ENCODE measurements at regions of chr12 and their contacts with region 1.

Region 1: DNA sequence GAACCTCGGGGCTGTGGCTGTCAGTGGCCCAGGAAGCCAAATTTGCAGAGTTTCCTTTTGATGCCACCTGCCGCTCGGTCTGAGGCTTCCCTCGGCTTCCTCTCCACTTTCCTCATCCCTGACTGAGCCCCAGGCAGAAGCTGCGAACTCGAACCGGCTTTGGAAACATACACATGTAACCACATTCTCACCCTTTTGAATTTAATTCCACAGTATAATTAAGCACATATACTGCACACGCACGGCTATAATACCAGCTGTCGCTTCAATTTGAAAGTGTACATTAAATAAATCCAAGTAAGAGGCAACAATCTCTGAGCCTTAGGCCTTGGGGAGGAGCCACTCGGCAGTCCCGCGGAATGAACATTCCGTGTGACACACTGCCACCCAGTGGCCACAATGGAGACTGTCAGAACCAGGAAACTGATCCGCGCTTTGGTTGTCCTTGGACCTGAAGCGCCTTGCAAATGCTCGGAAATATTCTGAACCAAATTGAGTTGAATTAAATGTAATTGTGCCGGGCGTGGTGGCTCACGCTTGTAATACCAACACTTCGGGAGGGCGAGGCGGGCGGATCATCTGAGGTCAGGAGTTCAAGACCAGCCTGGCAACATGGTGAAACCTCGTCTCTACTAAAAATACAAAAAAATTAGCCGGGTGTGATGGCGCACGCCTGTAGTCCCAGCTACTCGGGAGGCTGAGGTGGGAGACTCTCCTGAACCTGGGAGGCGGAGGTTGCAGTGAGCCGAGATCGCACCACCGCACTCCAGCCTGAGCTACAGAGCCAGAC is 117.9 kb upstream of the TMPO start:
- DNase-seq: peak; percentile 65 to 81 (median 78)
- ATAC-seq: peak; percentile 98
- H3K4me3 ChIP-seq: peak overlapping the region; percentile 76
- H3K4me3 Mint-ChIP-seq: peak overlapping the region; percentile 79 to 89 (median 86)
- H3K27ac ChIP-seq: peak overlapping the region; percentile 11
- H3K27ac Mint-ChIP-seq: peak overlapping the region; percentile 3 to 84 (median 58)
- H3K4me1 ChIP-seq: peaks cover 0 to 11% of the 10 kb centered on the region in 2 donors
- H3K4me1 Mint-ChIP-seq: peaks cover 11 to 31% (median 17%) of the 10 kb centered on the region in 7 donors
- H3K27me3 ChIP-seq: no peaks in the 10 kb centered on the region
- H3K27me3 Mint-ChIP-seq: peaks cover 0 to 7% (median 0%) of the 10 kb centered on the region in 5 donors

Region 2: DNA sequence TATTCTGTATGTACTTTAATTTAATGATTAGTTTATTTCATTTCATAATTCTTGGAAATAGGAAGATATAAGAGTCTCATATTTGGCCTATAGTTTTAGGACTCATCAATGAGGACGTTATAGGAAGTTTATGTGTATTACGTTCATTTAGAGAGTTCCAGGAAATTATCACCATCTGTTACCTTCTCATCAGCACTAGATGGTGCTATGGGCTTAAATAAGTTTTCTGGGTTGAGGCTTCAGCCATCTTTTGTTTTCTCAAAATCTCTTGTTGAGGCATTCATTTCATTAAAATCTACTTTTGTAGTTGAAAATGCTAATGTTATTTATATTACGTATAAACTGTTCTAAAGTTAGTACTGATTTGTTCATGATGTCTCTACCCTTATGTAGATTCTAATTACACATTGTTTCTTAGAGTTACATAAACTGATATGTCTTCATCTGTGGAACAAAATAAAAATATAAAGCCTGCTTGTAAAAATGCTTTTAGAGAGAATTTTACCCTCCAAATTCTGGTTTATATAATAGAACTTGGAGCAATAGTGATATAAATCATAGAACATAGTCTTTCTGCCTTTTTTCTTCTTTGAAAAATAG is 1818.9 kb before region 1 on chr12:
- CTCF ChIA-PET with region 1: interaction called, 3 read pairs
- POLR2A ChIA-PET with region 1: no interaction called
- intact Hi-C with region 1: loop called (anchors 1 kb)
- DNase-seq: peak in 7 of 9 donors; percentile 26 to 62 (median 52)
- ATAC-seq: peak; percentile 84
- H3K4me3 ChIP-seq: no peak overlapping the region
- H3K4me3 Mint-ChIP-seq: no peak overlapping the region
- H3K27ac ChIP-seq: no peak overlapping the region
- H3K27ac Mint-ChIP-seq: no peak overlapping the region
- H3K4me1 ChIP-seq: no peaks in the 10 kb centered on the region
- H3K4me1 Mint-ChIP-seq: peaks cover 0 to 3% (median 0%) of the 10 kb centered on the region in 7 donors
- H3K27me3 ChIP-seq: no peaks in the 10 kb centered on the region
- H3K27me3 Mint-ChIP-seq: peaks cover 0 to 12% (median 5%) of the 10 kb centered on the region in 5 donors

Region 3: DNA sequence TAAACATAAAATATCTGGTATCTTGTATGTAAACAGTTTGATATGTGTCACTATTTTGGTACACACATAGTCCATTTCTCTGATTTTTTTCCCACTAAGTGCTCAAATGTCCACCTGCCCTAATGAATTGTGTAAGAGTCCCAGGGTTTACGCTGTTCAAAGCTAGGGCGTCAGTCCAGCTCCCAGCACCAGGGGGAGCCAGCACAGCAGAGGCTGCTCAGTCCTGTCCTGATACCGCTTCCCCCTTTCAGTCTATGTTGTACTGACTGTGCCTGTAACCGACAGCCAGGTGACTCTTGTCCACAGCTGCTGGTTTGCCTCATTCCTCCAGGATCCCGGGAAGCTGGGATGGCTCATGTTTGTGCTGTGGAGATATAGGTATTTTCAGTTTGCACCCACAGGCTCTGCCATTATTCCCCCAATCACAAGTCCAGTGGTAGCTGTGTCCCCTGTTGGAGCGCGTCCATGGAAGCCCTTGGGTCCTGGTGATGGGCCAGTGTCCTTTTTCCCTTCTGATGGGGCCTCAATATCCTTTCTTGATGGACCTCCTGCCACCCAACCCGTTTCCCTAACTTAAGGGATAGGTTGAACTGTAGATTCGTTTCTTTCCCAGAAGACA is 1248.5 kb before region 1 on chr12:
- CTCF ChIA-PET with region 1: interaction called, 4 read pairs
- POLR2A ChIA-PET with region 1: no interaction called
- intact Hi-C with region 1: loop called in 1 of 2 experiments (anchors 1 kb)
- DNase-seq: peak; percentile 4 to 49 (median 10)
- ATAC-seq: peak; percentile 85
- H3K4me3 ChIP-seq: no peak overlapping the region
- H3K4me3 Mint-ChIP-seq: no peak overlapping the region
- H3K27ac ChIP-seq: no peak overlapping the region
- H3K27ac Mint-ChIP-seq: no peak overlapping the region
- H3K4me1 ChIP-seq: no peaks in the 10 kb centered on the region
- H3K4me1 Mint-ChIP-seq: peaks cover 0 to 5% (median 0%) of the 10 kb centered on the region in 7 donors
- H3K27me3 ChIP-seq: no peaks in the 10 kb centered on the region
- H3K27me3 Mint-ChIP-seq: peaks cover 7 to 22% (median 14%) of the 10 kb centered on the region in 5 donors

Region 4: GRCh38 chr12:97308576-97309198 is 1088.8 kb before region 1 on chr12:
- CTCF ChIA-PET with region 1: no interaction called
- POLR2A ChIA-PET with region 1: no interaction called
- intact Hi-C with region 1: loop called in 1 of 2 experiments (anchors 1 kb)
- DNase-seq: peak in 7 of 9 donors; percentile 14 to 58 (median 54)
- ATAC-seq: peak; percentile 66
- H3K4me3 ChIP-seq: no peak overlapping the region
- H3K4me3 Mint-ChIP-seq: no peak overlapping the region
- H3K27ac ChIP-seq: no peak overlapping the region
- H3K27ac Mint-ChIP-seq: no peak overlapping the region
- H3K4me1 ChIP-seq: no peaks in the 10 kb centered on the region
- H3K4me1 Mint-ChIP-seq: peaks cover 0 to 2% (median 0%) of the 10 kb centered on the region in 7 donors
- H3K27me3 ChIP-seq: no peaks in the 10 kb centered on the region
- H3K27me3 Mint-ChIP-seq: peaks cover 5 to 25% (median 17%) of the 10 kb centered on the region in 5 donors

Region 5: DNA sequence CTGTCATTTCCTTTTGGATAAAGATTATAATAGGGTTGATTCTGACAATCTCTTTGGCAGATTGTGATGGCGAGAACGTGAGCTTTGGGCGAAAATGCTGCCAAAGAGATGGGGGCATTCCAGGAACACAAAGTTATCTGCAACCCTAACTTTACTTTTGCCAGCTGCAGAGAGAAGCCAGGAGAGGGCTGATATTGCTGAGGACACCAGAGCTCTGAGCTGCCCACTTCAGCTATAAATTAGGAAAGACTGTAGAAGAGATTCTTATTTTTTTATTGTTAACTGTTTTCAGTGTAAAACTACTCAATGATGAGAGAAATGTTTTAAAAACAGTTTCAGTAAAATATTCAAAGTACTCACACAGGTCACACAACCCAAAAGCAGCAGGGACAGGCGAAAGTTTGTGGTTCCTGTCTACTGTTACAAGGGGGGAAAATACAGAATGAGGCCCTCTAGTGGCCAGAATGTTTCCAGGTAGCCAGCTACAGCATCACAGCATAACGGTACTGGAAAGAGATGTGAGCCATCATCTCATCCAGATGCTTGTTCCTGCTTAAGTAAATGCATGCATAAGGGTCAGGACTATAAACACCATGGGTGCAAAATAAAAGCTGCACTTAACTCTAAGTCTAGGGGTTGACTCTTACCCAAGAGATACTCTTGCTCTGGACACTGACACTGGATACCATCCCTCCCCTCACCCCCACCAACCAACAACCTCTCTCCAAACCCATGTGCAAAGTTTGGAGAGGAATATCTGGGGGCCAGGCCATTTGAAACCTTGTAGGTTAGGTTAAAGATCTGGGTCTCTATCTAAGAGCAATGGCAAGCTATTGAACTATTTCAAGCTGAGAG is 436.5 kb before region 1 on chr12:
- CTCF ChIA-PET with region 1: no interaction called
- POLR2A ChIA-PET with region 1: no interaction called
- intact Hi-C with region 1: loop called in 1 of 2 experiments (anchors 1 kb)
- DNase-seq: peak in 1 of 9 donors; percentile 7
- ATAC-seq: no peak
- H3K4me3 ChIP-seq: no peak overlapping the region
- H3K4me3 Mint-ChIP-seq: no peak overlapping the region
- H3K27ac ChIP-seq: no peak overlapping the region
- H3K27ac Mint-ChIP-seq: no peak overlapping the region
- H3K4me1 ChIP-seq: no peaks in the 10 kb centered on the region
- H3K4me1 Mint-ChIP-seq: no peaks in the 10 kb centered on the region
- H3K27me3 ChIP-seq: no peaks in the 10 kb centered on the region
- H3K27me3 Mint-ChIP-seq: no peaks in the 10 kb centered on the region

Region 6: GRCh38 chr12:98373025-98373554 is 24.4 kb before region 1 on chr12:
- CTCF ChIA-PET with region 1: no interaction called
- POLR2A ChIA-PET with region 1: no interaction called
- intact Hi-C with region 1: loop called (anchors 1 to 2 kb)
- DNase-seq: no peak
- ATAC-seq: no peak
- H3K4me3 ChIP-seq: no peak overlapping the region
- H3K4me3 Mint-ChIP-seq: no peak overlapping the region
- H3K27ac ChIP-seq: no peak overlapping the region
- H3K27ac Mint-ChIP-seq: no peak overlapping the region
- H3K4me1 ChIP-seq: no peaks in the 10 kb centered on the region
- H3K4me1 Mint-ChIP-seq: peaks cover 5 to 26% (median 10%) of the 10 kb centered on the region in 7 donors
- H3K27me3 ChIP-seq: peaks cover 0 to 5% of the 10 kb centered on the region in 2 donors
- H3K27me3 Mint-ChIP-seq: peaks cover 32 to 58% (median 48%) of the 10 kb centered on the region in 5 donors

Region 7: GRCh38 chr12:98503592-98504367 is 106.3 kb after region 1 on chr12:
- CTCF ChIA-PET with region 1: no interaction called
- POLR2A ChIA-PET with region 1: no interaction called
- intact Hi-C with region 1: loop called in 1 of 2 experiments (anchors 1 kb)
- DNase-seq: peak; percentile 89 to 95 (median 92)
- ATAC-seq: peak; percentile 94
- H3K4me3 ChIP-seq: peak overlapping the region; percentile 97
- H3K4me3 Mint-ChIP-seq: peak overlapping the region; percentile 89 to 99 (median 94)
- H3K27ac ChIP-seq: peak overlapping the region; percentile 90
- H3K27ac Mint-ChIP-seq: peak overlapping the region; percentile 95 to 100 (median 100)
- H3K4me1 ChIP-seq: peaks cover 0 to 11% of the 10 kb centered on the region in 2 donors
- H3K4me1 Mint-ChIP-seq: peaks cover 6 to 30% (median 23%) of the 10 kb centered on the region in 7 donors
- H3K27me3 ChIP-seq: no peaks in the 10 kb centered on the region
- H3K27me3 Mint-ChIP-seq: peaks cover 0 to 18% (median 3%) of the 10 kb centered on the region in 5 donors

Measured in naive thymus-derived CD4-positive, alpha-beta T cell (primary cell).